ENCODE measurements at regions of chr7 and their contacts with region 1.

Region 1: DNA sequence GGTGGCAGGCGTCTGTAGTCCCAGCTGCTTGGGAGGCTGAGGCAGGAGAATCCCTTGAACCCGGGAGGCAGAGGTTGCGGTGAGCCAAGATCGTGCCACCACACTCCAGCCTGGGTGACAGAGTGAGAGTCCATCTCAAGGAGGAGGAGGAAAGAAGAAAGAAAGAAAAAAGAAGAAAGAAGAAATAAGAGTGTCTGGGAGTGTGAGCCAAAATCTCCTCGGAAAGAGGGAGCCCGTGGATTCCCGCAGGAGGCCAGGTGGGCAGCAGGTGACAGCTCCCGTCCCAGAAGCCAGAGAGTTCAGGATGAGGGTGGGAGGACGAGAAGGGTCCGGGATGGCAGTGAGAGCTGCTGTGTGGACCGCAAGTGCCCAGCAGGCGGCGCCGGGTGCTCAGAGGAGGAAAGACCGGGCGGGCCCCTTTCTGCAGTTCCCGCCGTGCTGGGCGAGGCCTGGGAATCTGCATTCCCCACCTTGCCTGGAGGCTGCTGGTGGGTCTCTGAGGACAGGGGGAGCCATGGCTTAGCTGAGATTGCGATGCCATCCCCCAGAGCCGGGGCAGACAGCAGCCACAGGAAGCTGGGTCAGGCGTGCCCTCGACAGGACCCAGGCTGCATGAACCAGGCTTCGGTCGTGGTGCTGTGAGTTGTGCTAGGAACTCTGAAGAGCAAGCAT is 17.1 kb upstream of the AMZ1 start:
- DNase-seq: no peak
- H3K4me3 ChIP-seq: no peak overlapping the region
- H3K27ac ChIP-seq: no peak overlapping the region
- H3K27me3 ChIP-seq: peaks cover 2% of the 10 kb centered on the region
- CTCF ChIP-seq: peak; percentile 85

Region 2: GRCh38 chr7:2680792-2681490 is 10.1 kb after region 1 on chr7:
- CTCF ChIA-PET with region 1: interaction called, 16 read pairs
- POLR2A ChIA-PET with region 1: interaction called, 6 read pairs
- DNase-seq: no peak
- H3K4me3 ChIP-seq: no peak overlapping the region
- H3K27ac ChIP-seq: no peak overlapping the region
- H3K27me3 ChIP-seq: peaks cover 2% of the 10 kb centered on the region
- CTCF ChIP-seq: peak; percentile 70

Region 3: DNA sequence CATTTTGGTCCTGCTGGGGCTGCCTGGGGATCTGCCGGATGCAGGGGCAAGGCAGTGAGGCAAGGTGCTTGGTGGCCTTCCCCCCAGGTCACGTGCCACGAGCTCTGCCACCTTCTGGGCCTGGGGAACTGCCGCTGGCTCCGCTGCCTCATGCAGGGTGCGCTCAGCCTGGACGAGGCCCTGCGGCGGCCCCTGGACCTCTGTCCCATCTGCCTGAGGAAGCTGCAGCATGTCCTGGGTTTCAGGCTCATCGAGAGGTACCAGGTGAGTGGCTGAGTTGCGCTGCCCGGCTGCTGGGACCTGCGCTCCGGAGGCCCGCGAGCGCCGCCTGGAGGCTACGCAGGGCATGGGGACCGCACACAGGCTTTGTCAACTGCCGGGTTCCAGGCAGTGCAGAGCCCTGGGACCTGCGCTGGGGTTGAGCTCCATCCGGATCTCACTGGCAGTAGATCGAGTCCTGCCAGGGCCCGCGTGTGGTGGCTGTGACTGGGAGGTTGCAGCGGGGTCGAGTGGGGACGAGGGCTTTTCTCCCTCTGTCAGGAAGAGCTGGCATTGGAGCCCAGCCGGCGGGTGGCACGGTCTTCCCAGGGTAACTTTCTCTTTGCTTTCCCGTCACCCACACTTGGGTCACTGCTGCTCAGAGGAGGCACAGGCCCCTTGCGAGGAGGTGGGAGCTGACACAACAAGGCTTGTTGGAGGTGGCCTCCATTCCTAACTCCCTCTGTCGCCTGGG is 38.9 kb after region 1 on chr7:
- CTCF ChIA-PET with region 1: interaction called, 9 read pairs
- POLR2A ChIA-PET with region 1: interaction called, 10 read pairs
- DNase-seq: no peak
- H3K4me3 ChIP-seq: no peak overlapping the region
- H3K27ac ChIP-seq: no peak overlapping the region
- H3K27me3 ChIP-seq: no peaks in the 10 kb centered on the region
- CTCF ChIP-seq: peak; percentile 78